ENCODE measurements at regions of chr7 and their contacts with region 1.

Region 1: DNA sequence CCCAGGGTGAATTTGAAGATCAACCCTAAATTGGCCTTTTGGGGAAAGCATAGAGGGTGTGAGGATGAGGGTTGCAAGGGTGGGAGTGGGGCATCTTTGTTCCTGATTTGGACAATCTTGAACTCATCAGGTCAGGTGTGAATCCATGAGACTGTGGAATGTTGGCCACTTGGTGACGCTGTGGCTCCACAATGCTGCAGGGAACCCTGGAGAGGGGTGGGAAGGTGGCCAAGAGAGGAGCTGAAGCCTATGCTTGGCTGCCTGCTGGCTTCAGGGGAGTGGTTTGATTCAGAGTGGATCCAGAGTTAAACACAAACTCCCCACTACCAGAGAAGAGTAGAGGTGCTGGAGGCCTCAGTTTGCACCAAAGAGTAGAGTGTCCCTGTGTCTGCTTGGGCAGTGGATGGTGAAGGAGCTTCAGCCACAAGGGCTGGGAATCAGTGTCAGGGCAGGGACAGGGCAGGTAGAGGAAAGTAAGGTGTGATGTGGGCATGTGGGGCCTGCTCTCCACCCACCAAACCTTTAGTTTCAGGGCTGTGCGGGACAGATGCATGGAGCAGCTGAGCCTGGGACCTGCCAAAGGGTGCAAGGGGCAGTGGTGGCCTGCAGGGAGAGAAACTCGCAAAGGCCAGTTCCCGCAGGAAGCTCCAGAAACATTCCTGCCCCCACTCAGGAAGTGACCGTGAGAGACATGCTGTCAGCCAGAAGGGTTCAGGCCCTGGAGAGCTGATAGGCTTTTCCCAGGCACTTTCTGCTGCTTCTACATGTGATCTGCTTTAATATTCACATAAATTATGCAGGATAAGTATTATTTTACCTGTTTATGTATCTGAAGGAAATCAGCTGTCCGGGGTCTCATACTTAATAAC is 81.0 kb upstream of the PRSS58 start:
- DNase-seq: no peak
- ATAC-seq: no peak

Region 2: DNA sequence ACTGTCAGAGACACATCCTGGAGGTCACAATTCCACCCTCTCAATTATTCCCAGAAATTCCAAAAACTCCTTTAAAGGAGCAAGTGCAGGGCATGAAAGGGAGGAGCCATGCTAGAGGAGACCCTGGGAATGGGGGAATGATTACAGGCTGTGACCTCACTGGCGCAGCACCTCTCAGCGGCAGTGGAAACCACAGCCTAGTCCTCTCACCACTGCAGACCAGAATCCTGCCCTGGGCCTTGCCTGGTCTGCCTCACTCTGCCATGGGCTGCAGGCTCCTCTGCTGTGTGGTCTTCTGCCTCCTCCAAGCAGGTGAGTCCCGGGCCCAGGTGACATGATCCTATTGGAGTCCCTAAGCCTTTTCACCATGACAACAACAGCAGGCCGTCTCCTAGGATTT is 30.5 kb before region 1 on chr7:
- intact Hi-C with region 1: loop called (anchors 2 kb)
- DNase-seq: no peak
- ATAC-seq: no peak